ENCODE measurements at regions of chr14 and their contacts with region 1.

Region 1: GRCh38 chr14:93939304-93940229 is 12.4 kb downstream of the FAM181A start:
- DNase-seq: peak; percentile 78
- ATAC-seq: peak; percentile 83 to 85

Region 2: DNA sequence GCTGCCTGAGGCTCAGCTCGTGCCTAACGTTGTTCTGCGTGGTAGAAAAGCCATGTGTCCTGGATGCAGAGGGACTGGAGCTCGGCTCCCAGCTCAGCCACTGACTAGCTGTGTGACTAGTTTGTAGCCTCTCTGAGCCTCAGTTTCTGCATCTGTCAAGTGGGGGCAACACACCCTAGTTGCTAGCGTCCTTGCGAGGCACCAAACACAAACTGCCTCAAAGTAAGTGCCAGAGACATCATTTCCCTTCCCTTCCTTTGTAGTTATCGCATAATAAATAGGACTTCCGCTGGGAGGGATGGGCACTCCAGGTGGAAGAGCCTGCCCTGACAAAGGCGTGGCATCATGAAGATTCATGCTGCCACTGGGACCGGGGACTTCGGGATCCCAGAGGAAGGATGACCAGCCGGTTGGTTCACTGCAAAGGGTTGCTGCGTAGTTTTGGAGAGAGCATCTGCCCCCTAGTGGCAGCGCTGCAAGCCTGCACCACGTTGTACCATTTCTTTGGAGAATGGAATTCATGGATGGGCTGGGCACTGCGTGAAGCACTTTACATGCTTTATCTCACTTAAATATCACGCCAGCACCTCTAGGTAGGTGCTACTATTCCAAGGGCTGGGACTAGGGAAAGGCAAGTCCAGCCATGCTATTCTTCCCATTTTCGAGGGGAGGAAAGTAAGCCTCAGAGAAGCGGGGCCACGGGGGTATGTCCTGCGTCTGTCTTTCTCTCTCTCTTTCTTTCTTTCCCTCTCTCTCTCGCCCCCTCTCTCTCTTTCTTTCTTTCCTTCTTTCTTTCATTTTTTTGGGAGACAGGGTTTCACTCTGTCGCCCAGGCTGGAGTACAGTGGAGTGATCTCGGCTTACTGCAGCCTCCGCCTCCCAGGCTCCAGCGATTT is 62.2 kb after region 1 on chr14:
- intact Hi-C with region 1: loop called (anchors 2 to 5 kb)
- DNase-seq: peak; percentile 57
- ATAC-seq: peak; percentile 74 to 86

Region 3: DNA sequence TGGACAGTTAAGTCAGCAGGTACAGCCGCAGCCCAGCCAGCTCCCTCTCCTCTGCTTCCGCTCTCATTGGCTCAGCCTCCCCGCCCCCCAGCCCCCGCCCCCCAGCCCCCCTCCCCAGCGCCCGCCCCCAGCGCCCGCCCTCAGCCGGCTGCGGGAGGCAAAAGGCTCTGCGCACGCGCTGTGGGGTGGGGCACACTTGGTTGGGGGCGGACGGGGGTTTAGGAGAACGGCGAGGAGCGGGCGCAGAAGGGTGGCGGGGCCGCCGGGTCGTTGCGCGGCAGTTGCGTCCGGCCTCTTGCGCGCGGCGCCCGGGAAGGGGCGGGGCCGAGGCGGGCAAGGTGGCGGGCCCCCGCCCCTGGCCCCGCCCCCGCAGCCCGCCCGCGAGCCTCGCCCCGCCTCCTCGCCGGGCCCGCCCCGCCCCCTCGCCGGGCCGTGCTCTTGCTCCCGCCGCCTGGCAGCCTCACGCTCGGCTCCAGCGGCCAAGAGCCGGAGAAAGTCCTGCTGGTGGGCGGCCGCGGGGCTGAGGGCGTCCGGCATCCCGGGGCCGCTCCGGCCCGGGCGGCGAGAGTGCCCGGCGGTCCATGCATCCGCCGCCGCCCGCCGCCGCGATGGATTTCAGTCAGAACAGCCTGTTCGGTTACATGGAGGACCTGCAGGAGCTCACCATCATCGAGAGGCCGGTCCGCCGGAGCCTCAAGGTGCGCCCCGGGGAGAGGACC is 234.5 kb after region 1 on chr14 and contains the start of gene PPP4R4:
- intact Hi-C with region 1: loop called in 1 of 2 experiments (anchors 10 kb)
- DNase-seq: peak; percentile 89
- ATAC-seq: peak; percentile 95 to 97
- total RNA-seq, gene PPP4R4: 0.18 to 0.29 TPM

Region 4: DNA sequence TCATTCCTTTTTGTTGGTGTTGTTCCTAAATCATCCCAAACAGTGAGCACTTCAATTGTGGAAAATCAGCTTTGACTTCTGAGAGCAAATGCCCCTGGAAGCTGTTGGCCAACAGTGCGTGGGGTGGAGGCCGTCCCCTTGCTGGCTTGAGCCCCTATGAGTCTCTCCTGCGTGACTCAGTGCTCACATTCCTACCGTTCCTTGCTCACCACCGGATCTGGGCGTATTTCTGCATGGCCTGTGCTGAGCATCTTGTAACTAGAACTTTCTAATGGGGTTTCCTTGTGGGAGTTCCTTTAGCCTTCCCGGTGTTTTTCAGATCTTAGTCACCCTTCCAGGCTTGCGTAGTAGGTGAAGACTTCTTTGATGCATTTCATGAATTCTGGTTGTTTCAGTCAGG is 434.1 kb after region 1 on chr14:
- intact Hi-C with region 1: no loop called
- DNase-seq: no peak
- ATAC-seq: peak in 1 of 2 donors; percentile 68

Measured in left cardiac atrium (tissue), 4 donors.